ENCODE measurements at regions of chr2 and their contacts with region 1.

Region 1: GRCh38 chr2:175167792-175168563 is at the start of gene ATF2:
- DNase-seq: peak; percentile 100
- H3K4me3 ChIP-seq: peak within 1 kb of the TSS; percentile 85 to 98 (median 95)
- H3K27ac ChIP-seq: peak within 1 kb of the TSS; percentile 95
- H3K4me1 ChIP-seq: peaks cover 4% of the 10 kb centered on the region
- H3K27me3 ChIP-seq: no peaks in the 10 kb centered on the region
- CTCF ChIP-seq: no peak
- total RNA-seq, gene ATF2: 40.4 to 47.2 TPM

Region 2: GRCh38 chr2:175111200-175111657 is 56.7 kb before region 1 on chr2:
- CTCF ChIA-PET with region 1: no interaction called
- dilution Hi-C with region 1: no loop called
- in situ Hi-C with region 1: loop called in 1 of 2 experiments (anchors 10 kb)
- intact Hi-C with region 1: loop called (anchors 5 kb)
- DNase-seq: peak; percentile 34
- H3K4me3 ChIP-seq: no peak overlapping the region
- H3K27ac ChIP-seq: no peak overlapping the region
- H3K4me1 ChIP-seq: no peaks in the 10 kb centered on the region
- H3K27me3 ChIP-seq: no peaks in the 10 kb centered on the region
- CTCF ChIP-seq: peak; percentile 58 to 65

Region 3: GRCh38 chr2:175136334-175137215 is 31.4 kb before region 1 on chr2:
- CTCF ChIA-PET with region 1: no interaction called
- dilution Hi-C with region 1: no loop called
- in situ Hi-C with region 1: no loop called
- intact Hi-C with region 1: loop called (anchors 2 kb)
- DNase-seq: no peak
- H3K4me3 ChIP-seq: no peak overlapping the region
- H3K27ac ChIP-seq: no peak overlapping the region
- H3K4me1 ChIP-seq: no peaks in the 10 kb centered on the region
- H3K27me3 ChIP-seq: no peaks in the 10 kb centered on the region
- CTCF ChIP-seq: no peak

Region 4: DNA sequence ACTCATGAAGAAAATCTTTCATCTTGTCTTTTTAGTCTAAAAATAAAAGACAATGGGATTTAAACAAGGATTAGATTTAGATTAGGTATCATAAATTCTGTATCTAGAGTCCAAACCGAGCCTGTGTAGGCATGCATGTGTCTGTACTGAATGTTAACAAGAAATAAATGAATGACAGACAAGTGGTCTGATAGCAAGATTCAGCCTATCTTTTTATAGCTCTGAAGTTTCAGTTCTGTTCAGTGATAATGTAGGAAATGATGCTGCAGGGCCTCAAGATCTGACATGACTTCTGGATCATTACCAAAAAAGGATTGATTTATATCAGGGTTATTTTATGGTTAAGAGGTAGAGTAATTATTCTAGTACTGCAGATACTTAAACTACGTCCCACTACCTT is 150.6 kb after region 1 on chr2:
- CTCF ChIA-PET with region 1: no interaction called
- dilution Hi-C with region 1: no loop called
- in situ Hi-C with region 1: no loop called
- intact Hi-C with region 1: no loop called
- DNase-seq: no peak
- H3K4me3 ChIP-seq: no peak overlapping the region
- H3K27ac ChIP-seq: no peak overlapping the region
- H3K4me1 ChIP-seq: no peaks in the 10 kb centered on the region
- H3K27me3 ChIP-seq: no peaks in the 10 kb centered on the region
- CTCF ChIP-seq: no peak

Measured in mammary epithelial cell (primary cell).